ENCODE measurements at regions of chr10 and their contacts with region 1.

Region 1: DNA sequence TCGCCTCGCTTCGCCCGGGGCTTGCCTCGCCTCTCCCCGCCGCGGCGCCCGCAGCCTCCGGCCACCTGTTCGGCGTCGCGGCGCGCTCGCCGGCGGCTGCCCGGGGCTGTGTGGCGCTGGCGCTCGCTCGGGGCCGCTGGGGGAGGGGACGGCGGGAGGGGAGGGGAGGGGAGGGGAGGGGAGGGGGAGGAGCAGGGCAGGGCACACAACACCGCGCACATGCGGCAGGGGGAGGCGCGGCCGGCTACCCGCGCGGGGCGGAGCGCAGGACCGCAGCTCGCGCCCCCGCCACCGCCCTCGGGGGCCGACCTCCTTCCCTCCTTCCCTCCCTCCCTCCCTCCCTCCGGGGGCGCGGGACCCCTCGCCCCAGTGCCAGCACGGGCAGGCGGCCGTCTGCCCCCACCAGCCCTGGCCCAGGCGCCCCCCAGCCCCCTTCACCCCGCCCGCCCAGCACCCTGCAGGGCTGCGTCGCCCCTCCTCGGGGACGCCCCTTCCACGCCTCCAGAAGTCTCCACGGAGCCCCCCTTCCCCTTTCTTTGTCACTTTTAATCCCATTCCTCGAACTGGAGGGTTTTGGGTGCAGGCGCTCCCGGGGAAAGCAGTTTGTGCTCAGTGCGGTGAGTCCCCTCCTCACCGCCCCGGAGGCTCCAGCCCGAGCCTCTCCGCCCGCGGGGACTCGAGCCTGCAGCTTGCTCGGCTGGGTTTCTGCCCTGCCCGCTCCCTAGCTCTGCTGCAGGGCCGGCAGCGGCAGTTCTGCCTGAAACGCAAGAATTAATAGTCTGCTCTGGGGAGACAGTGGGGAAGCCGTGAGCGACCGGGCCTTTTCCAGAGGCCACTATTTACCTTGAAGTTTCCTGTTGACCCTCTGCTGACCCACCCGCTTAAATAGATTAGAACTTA is at the start of gene PARD3:
- DNase-seq: no peak
- ATAC-seq: peak; percentile 70
- H3K4me3 ChIP-seq: peak within 1 kb of the TSS; percentile 41; the same call in 1 of the 2 replicates
- H3K27ac ChIP-seq: no peak within 1 kb of the TSS
- H3K4me1 ChIP-seq: no peaks in the 10 kb centered on the region
- H3K27me3 ChIP-seq: peaks cover 0 to 15% of the 10 kb centered on the region in 2 experiments; a peak in 3 of 4 replicates
- CTCF ChIP-seq: no peak
- EP300 ChIP-seq: no peak
- POLR2A ChIP-seq: no peak
- RAD21 ChIP-seq: no peak
- polyA plus RNA-seq, gene PARD3: 6.3 to 9.6 TPM

Region 2: GRCh38 chr10:34801097-34801733 is 14.2 kb before region 1 on chr10:
- CTCF ChIA-PET with region 1: interaction called, 3 read pairs
- POLR2A ChIA-PET with region 1: interaction called, 6 read pairs
- RAD21 ChIA-PET with region 1: interaction called, 6 read pairs
- SMC1A ChIA-PET with region 1: interaction called, 65 read pairs
- in situ Hi-C with region 1: no loop called
- intact Hi-C with region 1: no loop called
- DNase-seq: no peak
- ATAC-seq: no peak
- H3K4me3 ChIP-seq: no peak overlapping the region
- H3K27ac ChIP-seq: no peak overlapping the region
- H3K4me1 ChIP-seq: no peaks in the 10 kb centered on the region
- H3K27me3 ChIP-seq: no peaks in the 10 kb centered on the region
- CTCF ChIP-seq: no peak
- EP300 ChIP-seq: no peak
- POLR2A ChIP-seq: no peak
- RAD21 ChIP-seq: no peak

Region 3: GRCh38 chr10:34835908-34836508 is 20.6 kb after region 1 on chr10:
- CTCF ChIA-PET with region 1: interaction called, 4 read pairs
- POLR2A ChIA-PET with region 1: interaction called, 3 read pairs
- RAD21 ChIA-PET with region 1: interaction called, 9 read pairs
- SMC1A ChIA-PET with region 1: interaction called, 10 read pairs
- in situ Hi-C with region 1: no loop called
- intact Hi-C with region 1: no loop called
- DNase-seq: peak; percentile 59
- ATAC-seq: peak; percentile 85
- H3K4me3 ChIP-seq: no peak overlapping the region
- H3K27ac ChIP-seq: no peak overlapping the region
- H3K4me1 ChIP-seq: peaks cover 5% of the 10 kb centered on the region; the same call in 1 of the 2 replicates
- H3K27me3 ChIP-seq: no peaks in the 10 kb centered on the region
- CTCF ChIP-seq: peak in 2 of 3 experiments; percentile 16 to 21; a peak in 2 of 6 replicates
- EP300 ChIP-seq: no peak
- POLR2A ChIP-seq: no peak
- RAD21 ChIP-seq: peak; percentile 36; the same call in 1 of the 2 replicates

Region 4: DNA sequence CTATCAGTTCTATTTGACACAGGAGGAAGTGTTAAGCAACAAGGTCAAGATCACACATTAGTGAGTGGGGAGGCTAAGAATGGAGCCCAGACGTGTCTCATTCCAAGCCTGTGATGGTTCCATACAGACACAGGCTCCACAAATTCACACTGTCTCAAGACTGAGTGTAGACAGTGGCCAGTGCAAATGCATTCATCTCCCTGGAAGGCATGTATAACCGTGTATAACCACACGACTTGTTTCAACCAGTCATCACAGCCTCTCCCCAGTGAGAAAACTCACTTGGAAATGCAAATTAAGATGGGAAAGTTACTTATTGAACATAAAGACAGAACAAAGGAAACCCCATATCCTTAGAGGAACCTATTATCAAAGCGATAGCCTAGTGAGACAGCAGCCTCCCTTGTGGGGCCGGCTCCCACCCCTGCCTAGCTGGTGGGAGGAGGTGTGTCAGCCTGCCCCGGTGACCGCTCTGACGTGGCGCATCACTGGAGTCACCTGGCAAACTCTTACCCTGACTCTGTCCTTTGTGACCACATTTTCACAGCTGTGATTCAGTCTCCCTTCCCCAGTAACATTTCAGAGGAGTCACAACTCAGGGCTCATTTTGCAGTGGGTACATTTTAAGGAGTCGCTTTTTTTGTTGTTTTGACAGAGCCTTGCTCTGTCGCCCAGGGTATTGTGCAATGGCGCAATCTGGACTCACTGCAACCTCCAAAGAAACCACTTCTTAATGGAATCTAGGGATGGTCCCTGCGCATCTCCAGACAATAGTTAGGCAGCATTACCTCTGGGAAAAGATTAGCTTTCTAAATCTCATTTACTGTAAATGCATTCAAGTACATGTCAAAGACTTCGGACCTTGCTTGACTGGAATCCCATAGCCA is 126.3 kb after region 1 on chr10:
- CTCF ChIA-PET with region 1: no interaction called
- POLR2A ChIA-PET with region 1: no interaction called
- RAD21 ChIA-PET with region 1: no interaction called
- SMC1A ChIA-PET with region 1: no interaction called
- in situ Hi-C with region 1: no loop called
- intact Hi-C with region 1: no loop called
- DNase-seq: no peak
- ATAC-seq: peak; percentile 85
- H3K4me3 ChIP-seq: no peak overlapping the region
- H3K27ac ChIP-seq: no peak overlapping the region
- H3K4me1 ChIP-seq: no peaks in the 10 kb centered on the region
- H3K27me3 ChIP-seq: no peaks in the 10 kb centered on the region
- CTCF ChIP-seq: no peak
- EP300 ChIP-seq: no peak
- POLR2A ChIP-seq: no peak
- RAD21 ChIP-seq: no peak

Measured in GM12878 (cell line).